B cell (primary cell): ENCODE measurements at regions of chr10 and their contacts with region 1.

Region 1: GRCh38 chr10:33008499-33009243 is 50.6 kb upstream of the ITGB1 start:
- DNase-seq: peak; percentile 71
- ATAC-seq: peak; percentile 42
- H3K4me3 ChIP-seq: peak overlapping the region in 3 of 5 experiments; percentile 18 to 36 (median 22)
- H3K4me3 Mint-ChIP-seq: peak overlapping the region; percentile 59
- H3K27ac ChIP-seq: peak overlapping the region in 1 of 2 donors; percentile 5
- H3K27ac Mint-ChIP-seq: no peak overlapping the region
- H3K4me1 ChIP-seq: peaks cover 20 to 47% of the 10 kb centered on the region in 2 donors
- H3K4me1 Mint-ChIP-seq: peaks cover 45% of the 10 kb centered on the region
- H3K27me3 ChIP-seq: peaks cover 0 to 6% (median 0%) of the 10 kb centered on the region in 4 experiments
- H3K27me3 Mint-ChIP-seq: peaks cover 8% of the 10 kb centered on the region
- CTCF ChIP-seq: peak; percentile 99

Region 2: GRCh38 chr10:32445740-32446535 is 562.7 kb before region 1 on chr10 and contains the start of gene CCDC7:
- CTCF ChIA-PET with region 1: interaction called, 6 read pairs
- POLR2A ChIA-PET with region 1: no interaction called
- intact Hi-C with region 1: loop called (anchors 5 kb)
- DNase-seq: peak; percentile 93
- ATAC-seq: peak; percentile 99
- H3K4me3 ChIP-seq: peak within 1 kb of the TSS; percentile 93 to 99 (median 98)
- H3K4me3 Mint-ChIP-seq: peak within 1 kb of the TSS; percentile 98
- H3K27ac ChIP-seq: peak within 1 kb of the TSS; percentile 95 to 99
- H3K27ac Mint-ChIP-seq: peak within 1 kb of the TSS; percentile 100
- H3K4me1 ChIP-seq: peaks cover 7 to 8% of the 10 kb centered on the region in 2 donors
- H3K4me1 Mint-ChIP-seq: peaks cover 13% of the 10 kb centered on the region
- H3K27me3 ChIP-seq: peaks cover 0 to 4% (median 0%) of the 10 kb centered on the region in 4 experiments
- H3K27me3 Mint-ChIP-seq: peaks cover 16% of the 10 kb centered on the region
- CTCF ChIP-seq: peak; percentile 65
- total RNA-seq, gene CCDC7: 23.5 and 26.6 TPM in 2 replicates

Region 3: DNA sequence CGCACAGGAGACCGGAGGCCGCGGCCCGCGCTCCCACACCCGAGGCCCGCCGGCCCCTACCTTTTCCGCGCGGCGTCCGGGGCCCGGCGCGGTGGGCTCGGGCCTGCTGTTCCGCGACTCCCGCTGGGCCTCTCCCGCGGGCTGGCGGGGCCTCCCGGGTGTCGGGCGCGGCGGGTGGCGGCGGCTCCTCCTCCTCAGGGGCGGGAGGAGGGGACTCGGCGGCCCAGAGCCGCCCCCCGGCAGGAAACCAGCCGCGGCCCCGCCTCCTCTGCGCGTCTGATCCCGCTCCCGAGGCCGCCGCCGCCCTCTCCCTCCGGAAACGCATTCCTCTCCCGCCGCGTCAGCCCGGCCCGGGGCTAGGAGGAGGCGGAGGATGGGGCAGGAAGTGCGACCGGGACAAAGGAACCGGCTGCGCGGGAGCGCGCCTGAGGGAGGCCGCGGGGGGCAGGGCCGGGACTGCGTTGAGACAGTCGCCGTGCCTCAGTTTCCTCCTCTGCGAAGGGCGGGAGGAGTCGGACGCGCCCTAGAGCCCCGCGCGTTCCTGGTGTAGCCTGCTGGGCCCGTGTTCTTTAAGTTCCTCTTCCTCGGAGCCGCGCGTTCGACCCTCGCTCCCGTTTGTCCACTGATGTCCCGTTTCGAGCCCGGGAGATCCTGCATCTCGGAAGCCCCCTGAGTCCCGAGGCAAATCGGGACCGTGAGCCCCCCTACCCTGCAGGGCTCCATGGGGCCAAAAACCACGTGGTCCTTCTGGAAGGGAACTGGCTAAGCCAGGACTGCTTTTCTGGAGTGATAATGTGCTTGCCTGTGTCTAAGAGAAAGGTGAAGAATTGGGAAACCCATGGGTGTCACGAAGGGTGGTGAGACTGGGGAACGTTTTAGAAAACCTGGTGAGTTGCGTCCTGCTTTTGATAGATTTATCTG is 50.3 kb before region 1 on chr10 and contains the start of gene ITGB1:
- CTCF ChIA-PET with region 1: interaction called, 7 read pairs
- POLR2A ChIA-PET with region 1: no interaction called
- intact Hi-C with region 1: loop called (anchors 2 kb)
- DNase-seq: peak; percentile 85
- ATAC-seq: peak; percentile 89
- H3K4me3 ChIP-seq: peak within 1 kb of the TSS; percentile 64 to 95 (median 90)
- H3K4me3 Mint-ChIP-seq: peak within 1 kb of the TSS; percentile 94
- H3K27ac ChIP-seq: peak within 1 kb of the TSS; percentile 74 to 84
- H3K27ac Mint-ChIP-seq: peak within 1 kb of the TSS; percentile 93
- H3K4me1 ChIP-seq: peaks cover 27 to 35% of the 10 kb centered on the region in 2 donors
- H3K4me1 Mint-ChIP-seq: peaks cover 63% of the 10 kb centered on the region
- H3K27me3 ChIP-seq: no peaks in the 10 kb centered on the region
- H3K27me3 Mint-ChIP-seq: no peaks in the 10 kb centered on the region
- CTCF ChIP-seq: no peak
- total RNA-seq, gene ITGB1: 118 and 128 TPM in 2 replicates

Region 4: DNA sequence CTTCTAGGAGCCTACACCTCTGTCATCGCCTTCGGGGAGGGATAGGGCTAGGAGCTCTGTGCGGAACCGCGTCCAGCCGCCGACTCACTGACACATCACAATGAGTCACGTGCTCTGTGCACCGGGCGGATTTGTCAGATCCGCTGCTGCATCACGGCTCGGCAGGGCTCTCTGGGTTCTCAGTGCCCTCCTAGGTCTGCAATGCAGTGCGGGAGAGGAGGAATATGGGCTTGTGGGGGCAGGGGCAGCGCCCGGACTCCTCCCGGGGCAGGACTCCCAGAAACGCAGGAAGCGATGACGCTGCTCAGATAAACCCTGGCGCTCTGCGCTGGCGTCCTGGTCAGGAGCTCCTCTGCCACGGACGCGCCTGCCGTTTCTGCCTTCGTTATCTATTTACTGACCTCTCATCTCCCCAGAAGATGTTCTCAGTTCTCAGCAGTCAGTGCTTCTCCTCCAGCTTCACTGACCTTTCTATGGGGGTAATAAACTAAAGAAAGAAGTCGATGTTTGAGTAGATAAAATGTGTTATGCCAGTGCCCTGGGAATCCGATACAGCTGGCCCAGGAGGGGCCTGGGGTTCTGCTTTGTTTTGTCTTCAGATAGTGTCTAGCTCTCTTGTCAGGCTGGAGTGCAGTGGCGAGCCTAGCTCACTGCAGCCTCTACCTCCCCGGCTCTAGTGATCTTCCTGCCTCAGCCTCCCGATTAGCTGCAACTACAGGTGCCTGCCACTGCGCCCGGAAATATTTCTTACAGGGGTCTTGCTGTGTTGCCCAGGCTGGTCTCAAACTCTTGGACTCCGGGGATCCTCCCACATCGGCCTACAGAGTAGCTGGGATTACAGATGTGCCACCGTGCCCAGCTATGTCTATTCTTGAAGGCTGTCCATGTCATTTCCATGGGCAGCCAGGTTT is 27.9 kb before region 1 on chr10:
- CTCF ChIA-PET with region 1: interaction called, 5 read pairs
- POLR2A ChIA-PET with region 1: no interaction called
- intact Hi-C with region 1: loop called (anchors 2 kb)
- DNase-seq: peak; percentile 76
- ATAC-seq: peak; percentile 97
- H3K4me3 ChIP-seq: peak overlapping the region; percentile 56 to 74 (median 67)
- H3K4me3 Mint-ChIP-seq: peak overlapping the region; percentile 95
- H3K27ac ChIP-seq: peak overlapping the region; percentile 37 to 55
- H3K27ac Mint-ChIP-seq: peak overlapping the region; percentile 89
- H3K4me1 ChIP-seq: peaks cover 3 to 12% of the 10 kb centered on the region in 2 donors
- H3K4me1 Mint-ChIP-seq: peaks cover 13% of the 10 kb centered on the region
- H3K27me3 ChIP-seq: peaks cover 0 to 2% (median 0%) of the 10 kb centered on the region in 4 experiments
- H3K27me3 Mint-ChIP-seq: no peaks in the 10 kb centered on the region
- CTCF ChIP-seq: no peak

Region 5: DNA sequence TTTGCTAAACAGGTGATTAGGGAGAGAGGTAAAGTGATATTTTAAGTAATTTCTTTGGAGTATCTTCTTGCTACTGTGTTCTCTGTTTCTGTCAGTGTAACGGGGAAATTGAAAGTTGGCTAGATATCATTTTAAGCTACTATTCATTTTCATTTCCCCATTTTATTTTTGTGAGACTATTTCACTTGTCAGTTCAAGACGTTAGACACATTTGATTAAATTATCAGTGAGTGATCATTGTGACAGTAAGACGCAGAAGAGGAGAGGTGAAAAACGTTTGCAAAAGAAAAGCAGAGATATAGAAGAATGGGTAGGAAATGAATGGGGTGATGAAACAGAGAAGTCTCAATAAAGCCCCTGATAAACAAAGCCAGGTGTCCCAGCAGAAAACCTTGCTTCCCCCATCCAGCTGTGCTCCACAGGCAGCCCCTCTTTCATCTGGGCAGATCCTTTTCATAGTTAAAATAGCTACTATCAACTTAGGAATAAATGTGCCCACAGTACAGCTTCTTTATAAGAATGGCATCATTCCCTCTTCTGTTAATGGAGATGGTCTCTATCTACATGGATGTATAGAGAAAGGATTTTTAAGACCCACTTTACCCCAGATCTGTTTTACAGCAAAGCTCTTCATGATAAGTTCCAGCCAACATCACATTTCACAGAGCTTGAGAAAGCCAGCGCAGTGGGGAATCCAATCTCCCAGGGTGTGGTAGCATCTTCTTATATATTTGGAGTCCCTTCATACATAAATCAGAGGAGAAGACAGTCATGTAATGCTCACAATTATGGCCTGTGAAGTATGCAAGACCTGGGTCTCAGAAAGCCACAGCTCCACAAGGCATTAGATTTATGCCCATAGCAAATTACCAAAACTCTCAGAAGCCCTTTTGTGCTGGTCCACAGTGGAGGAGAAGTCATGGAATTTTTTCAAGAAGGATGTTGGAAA is 87.5 kb after region 1 on chr10:
- CTCF ChIA-PET with region 1: interaction called, 3 read pairs
- POLR2A ChIA-PET with region 1: no interaction called
- intact Hi-C with region 1: loop called (anchors 5 kb)
- DNase-seq: peak; percentile 57
- ATAC-seq: peak; percentile 56
- H3K4me3 ChIP-seq: peak overlapping the region in 2 of 5 experiments; percentile 21 to 30
- H3K4me3 Mint-ChIP-seq: peak overlapping the region; percentile 70
- H3K27ac ChIP-seq: peak overlapping the region; percentile 59 to 65
- H3K27ac Mint-ChIP-seq: peak overlapping the region; percentile 81
- H3K4me1 ChIP-seq: peaks cover 44 to 54% of the 10 kb centered on the region in 2 donors
- H3K4me1 Mint-ChIP-seq: peaks cover 65% of the 10 kb centered on the region
- H3K27me3 ChIP-seq: no peaks in the 10 kb centered on the region
- H3K27me3 Mint-ChIP-seq: no peaks in the 10 kb centered on the region
- CTCF ChIP-seq: no peak

Region 6: DNA sequence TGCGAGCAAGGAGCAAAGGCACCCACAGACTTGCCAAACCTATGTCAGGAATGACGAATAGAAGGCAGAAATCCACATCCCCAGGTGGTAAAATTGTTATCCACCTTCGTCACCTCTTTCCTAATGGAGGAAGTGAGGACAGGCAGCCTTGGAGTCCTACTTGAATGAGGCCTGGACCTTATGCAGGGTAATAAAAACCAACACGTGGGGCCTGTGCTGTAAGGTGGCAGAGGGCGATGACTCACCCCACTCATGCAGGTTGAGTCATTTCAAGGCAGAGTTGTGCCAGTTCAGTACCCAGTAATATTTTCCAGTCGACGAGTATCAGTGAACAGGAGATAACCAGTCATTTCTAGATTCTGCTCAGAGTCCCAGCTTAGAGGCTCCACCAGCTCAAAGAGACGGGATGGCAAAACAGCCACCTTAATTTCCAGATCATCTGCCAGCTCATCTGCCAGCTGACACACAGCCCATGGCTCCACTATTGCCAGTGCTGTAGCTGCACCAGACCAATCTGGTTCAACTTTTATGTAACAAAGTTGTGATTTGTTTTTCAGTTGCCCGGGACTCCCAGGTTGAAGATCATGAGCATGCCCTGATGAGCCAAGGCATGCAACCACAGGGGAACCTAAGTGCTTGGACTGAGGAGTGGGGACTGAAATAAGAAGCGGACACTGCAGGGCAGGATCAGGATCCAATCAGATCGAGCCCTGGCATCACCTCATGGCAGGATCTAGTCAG is 125.5 kb after region 1 on chr10:
- CTCF ChIA-PET with region 1: interaction called, 5 read pairs
- POLR2A ChIA-PET with region 1: no interaction called
- intact Hi-C with region 1: loop called (anchors 2 kb)
- DNase-seq: no peak
- ATAC-seq: peak; percentile 64
- H3K4me3 ChIP-seq: no peak overlapping the region
- H3K4me3 Mint-ChIP-seq: no peak overlapping the region
- H3K27ac ChIP-seq: no peak overlapping the region
- H3K27ac Mint-ChIP-seq: peak overlapping the region; percentile 67
- H3K4me1 ChIP-seq: peaks cover 9 to 21% of the 10 kb centered on the region in 2 donors
- H3K4me1 Mint-ChIP-seq: peaks cover 30% of the 10 kb centered on the region
- H3K27me3 ChIP-seq: no peaks in the 10 kb centered on the region
- H3K27me3 Mint-ChIP-seq: peaks cover 3% of the 10 kb centered on the region
- CTCF ChIP-seq: no peak

Region 7: GRCh38 chr10:34423673-34424625 is 1415.3 kb after region 1 on chr10:
- CTCF ChIA-PET with region 1: no interaction called
- POLR2A ChIA-PET with region 1: no interaction called
- intact Hi-C with region 1: no loop called
- DNase-seq: no peak
- ATAC-seq: no peak
- H3K4me3 ChIP-seq: no peak overlapping the region
- H3K4me3 Mint-ChIP-seq: no peak overlapping the region
- H3K27ac ChIP-seq: no peak overlapping the region
- H3K27ac Mint-ChIP-seq: no peak overlapping the region
- H3K4me1 ChIP-seq: no peaks in the 10 kb centered on the region
- H3K4me1 Mint-ChIP-seq: no peaks in the 10 kb centered on the region
- H3K27me3 ChIP-seq: no peaks in the 10 kb centered on the region
- H3K27me3 Mint-ChIP-seq: no peaks in the 10 kb centered on the region
- CTCF ChIP-seq: no peak